Activated CD4-positive, alpha-beta T cell treated with anti-CD3 and anti-CD28 coated beads, Interleukin-2, amount 10 ng/mL, durations not matched to agents 24 days and 14 days (primary cell): ENCODE measurements at regions of chr12 and their contacts with region 1.

Region 1: DNA sequence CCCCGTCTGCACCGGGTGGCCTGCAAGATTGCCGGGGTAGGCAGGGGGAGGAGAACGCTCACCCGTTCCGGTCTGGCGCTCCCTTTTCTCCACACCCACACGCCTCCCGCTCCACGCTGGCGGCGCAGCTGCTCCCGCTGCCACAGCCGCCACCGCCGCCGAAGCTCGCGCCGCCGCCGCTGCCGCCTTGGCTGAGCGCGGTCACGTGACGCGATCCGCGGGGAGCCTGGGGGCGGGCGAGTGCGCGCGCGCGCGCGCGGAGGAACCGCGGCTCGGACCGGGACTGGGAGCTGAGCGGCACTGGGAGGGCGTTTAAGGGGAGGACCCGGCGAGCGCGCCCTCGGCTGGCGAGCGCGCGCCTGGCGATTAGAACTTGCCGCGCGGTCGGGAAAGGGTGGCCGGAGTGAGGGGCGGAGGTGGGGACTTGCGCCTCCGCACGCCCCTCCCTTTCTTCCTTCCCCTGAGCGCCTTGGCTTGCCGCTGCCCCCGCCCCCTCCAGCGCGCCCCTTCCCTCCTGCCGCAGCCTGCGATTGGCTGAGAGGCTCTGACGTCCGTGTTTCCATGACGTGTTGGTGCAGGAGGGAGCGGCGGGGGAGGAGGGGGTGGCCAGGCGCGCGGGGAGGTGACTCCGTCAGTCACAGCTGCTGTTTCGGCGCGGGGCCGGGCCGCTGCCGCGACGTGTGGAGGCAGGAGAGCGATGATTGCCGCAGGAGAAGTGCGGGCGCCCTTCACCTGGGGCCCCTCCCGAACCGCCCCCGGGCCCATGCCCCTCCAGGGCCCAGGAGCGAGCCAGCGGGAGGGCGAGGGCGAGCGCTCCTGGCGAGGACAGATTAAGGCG is 738 bp upstream of the ATP2B1 start:
- DNase-seq: peak; percentile 99
- H3K4me3 Mint-ChIP-seq: peak overlapping the region; percentile 84
- H3K27ac Mint-ChIP-seq: peak overlapping the region; percentile 87
- H3K4me1 Mint-ChIP-seq: peaks cover 28% of the 10 kb centered on the region
- H3K27me3 Mint-ChIP-seq: peaks cover 33% of the 10 kb centered on the region

Region 2: DNA sequence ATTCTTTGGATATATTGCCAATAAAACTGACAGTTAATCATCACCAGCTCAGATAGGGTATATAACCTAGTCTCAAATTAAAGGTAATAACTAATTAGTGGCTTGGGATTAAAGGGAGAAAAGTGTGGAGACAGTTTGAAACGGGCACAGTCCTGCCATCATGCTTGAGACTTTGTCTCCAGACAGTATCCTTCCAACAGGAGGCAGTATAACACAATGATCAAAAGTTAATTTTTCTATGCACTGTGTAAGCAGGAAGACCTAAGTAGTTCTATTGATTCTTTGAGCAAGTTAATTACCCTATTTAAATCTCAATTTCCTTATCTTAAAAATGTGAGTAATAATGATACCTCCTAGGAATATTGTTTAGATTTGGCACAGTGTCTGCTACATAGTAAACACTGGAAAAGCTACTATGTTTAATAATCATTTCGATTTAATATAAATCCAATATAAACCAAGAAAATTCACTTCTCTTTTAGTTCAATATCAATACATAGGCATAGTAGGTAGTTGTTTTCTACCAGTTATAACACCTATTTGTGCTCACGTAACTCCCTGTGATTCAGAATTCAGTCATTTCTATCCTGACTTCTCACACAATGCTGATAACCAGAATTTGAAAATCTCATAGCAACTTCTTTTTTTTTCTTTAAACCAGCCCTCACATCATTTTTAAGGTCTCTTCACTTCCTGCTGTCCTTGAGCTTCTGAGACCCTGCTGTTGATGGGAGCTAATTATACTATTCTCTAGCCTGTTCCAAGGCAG is 238.5 kb before region 1 on chr12:
- intact Hi-C with region 1: loop called (anchors 5 kb)
- DNase-seq: peak; percentile 73
- H3K4me3 Mint-ChIP-seq: no peak overlapping the region
- H3K27ac Mint-ChIP-seq: peak overlapping the region; percentile 22
- H3K4me1 Mint-ChIP-seq: peaks cover 60% of the 10 kb centered on the region
- H3K27me3 Mint-ChIP-seq: no peaks in the 10 kb centered on the region

Region 3: DNA sequence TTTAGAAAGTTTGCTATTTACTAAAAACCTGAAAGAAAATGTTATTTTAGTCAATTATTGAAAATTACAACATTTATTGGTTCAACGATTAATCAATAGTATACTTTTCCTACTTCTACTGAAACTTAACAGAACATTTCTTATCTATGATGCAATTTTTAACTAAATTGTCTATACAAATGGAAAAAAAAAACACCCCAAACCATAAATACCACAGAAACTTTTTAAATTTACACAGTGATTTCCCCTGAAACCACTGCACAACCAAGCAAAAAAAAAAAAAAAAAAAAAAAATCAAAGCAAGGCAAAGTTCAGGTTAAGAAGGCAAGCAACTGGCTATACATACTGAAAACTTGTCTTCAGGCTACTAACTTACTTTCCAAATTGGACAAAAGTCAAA is 111.6 kb before region 1 on chr12:
- intact Hi-C with region 1: loop called (anchors 1 kb)
- DNase-seq: no peak
- H3K4me3 Mint-ChIP-seq: no peak overlapping the region
- H3K27ac Mint-ChIP-seq: peak overlapping the region; percentile 76
- H3K4me1 Mint-ChIP-seq: peaks cover 13% of the 10 kb centered on the region
- H3K27me3 Mint-ChIP-seq: peaks cover 10% of the 10 kb centered on the region

Region 4: DNA sequence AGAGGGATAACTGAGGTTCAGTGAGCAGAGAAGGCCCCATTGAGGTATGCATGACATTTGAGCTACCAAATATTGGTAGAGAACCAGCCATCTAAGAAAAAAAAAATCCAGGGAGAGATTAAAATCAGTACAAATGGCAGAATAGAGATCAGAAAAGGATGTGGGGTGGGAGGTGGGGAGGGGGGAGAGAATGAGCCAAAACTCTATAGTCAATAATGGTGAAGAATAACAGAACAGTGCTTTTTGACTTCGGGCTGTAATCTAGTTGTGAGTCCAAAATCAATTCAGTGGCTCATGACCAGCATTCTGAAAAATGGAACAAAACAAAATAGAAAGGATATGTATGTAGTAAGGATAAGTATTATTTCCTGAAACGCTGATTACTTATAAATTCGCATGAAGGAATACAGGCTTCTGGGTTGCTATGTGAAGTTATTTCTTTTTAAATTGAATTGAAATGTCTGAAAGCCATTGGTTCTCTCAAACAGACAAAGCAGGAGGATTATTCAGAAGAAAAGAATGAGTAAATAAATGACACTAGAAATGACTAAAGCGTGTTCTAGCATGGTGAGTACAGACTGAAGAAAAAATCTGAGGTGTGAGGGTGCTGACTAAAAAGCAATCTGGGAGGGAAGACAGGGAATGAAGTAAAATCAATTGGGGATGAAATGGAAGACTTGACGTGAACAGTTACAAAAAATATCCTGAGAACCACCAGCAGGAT is 73.2 kb before region 1 on chr12:
- intact Hi-C with region 1: no loop called
- DNase-seq: no peak
- H3K4me3 Mint-ChIP-seq: no peak overlapping the region
- H3K27ac Mint-ChIP-seq: no peak overlapping the region
- H3K4me1 Mint-ChIP-seq: peaks cover 2% of the 10 kb centered on the region
- H3K27me3 Mint-ChIP-seq: no peaks in the 10 kb centered on the region

Region 5: GRCh38 chr12:89671469-89671868 is 37.9 kb before region 1 on chr12:
- intact Hi-C with region 1: no loop called
- DNase-seq: no peak
- H3K4me3 Mint-ChIP-seq: no peak overlapping the region
- H3K27ac Mint-ChIP-seq: no peak overlapping the region
- H3K4me1 Mint-ChIP-seq: peaks cover 14% of the 10 kb centered on the region
- H3K27me3 Mint-ChIP-seq: no peaks in the 10 kb centered on the region

Region 6: DNA sequence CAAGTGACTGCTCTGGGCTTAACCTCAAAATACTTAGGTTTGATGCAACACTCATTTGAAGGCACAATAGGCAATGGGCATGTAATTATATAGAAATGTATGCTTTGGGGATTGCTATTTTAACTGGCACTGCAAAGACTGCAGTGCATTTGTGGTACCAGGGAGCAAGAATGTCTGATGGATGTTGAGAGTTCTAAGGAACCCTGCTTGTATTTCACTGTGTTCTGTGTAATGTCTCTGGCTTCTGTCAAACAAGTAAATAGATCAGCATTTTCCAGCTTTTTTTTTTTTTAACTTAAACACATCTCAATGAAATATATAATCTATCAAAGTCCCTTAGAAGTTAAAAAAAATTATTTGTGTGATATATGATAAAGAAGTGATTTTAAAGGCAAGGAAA is 94.0 kb after region 1 on chr12:
- intact Hi-C with region 1: no loop called
- DNase-seq: no peak
- H3K4me3 Mint-ChIP-seq: no peak overlapping the region
- H3K27ac Mint-ChIP-seq: no peak overlapping the region
- H3K4me1 Mint-ChIP-seq: no peaks in the 10 kb centered on the region
- H3K27me3 Mint-ChIP-seq: no peaks in the 10 kb centered on the region

Region 7: GRCh38 chr12:89862511-89863179 is 153.3 kb after region 1 on chr12:
- intact Hi-C with region 1: loop called (anchors 1 kb)
- DNase-seq: peak; percentile 86
- H3K4me3 Mint-ChIP-seq: peak overlapping the region; percentile 84
- H3K27ac Mint-ChIP-seq: peak overlapping the region; percentile 97
- H3K4me1 Mint-ChIP-seq: peaks cover 42% of the 10 kb centered on the region
- H3K27me3 Mint-ChIP-seq: no peaks in the 10 kb centered on the region

Region 8: GRCh38 chr12:89927226-89927698 is 217.9 kb after region 1 on chr12:
- intact Hi-C with region 1: no loop called
- DNase-seq: no peak
- H3K4me3 Mint-ChIP-seq: no peak overlapping the region
- H3K27ac Mint-ChIP-seq: no peak overlapping the region
- H3K4me1 Mint-ChIP-seq: peaks cover 5% of the 10 kb centered on the region
- H3K27me3 Mint-ChIP-seq: no peaks in the 10 kb centered on the region

Region 9: GRCh38 chr12:90042920-90043641 is 333.7 kb after region 1 on chr12:
- intact Hi-C with region 1: loop called (anchors 5 kb)
- DNase-seq: no peak
- H3K4me3 Mint-ChIP-seq: no peak overlapping the region
- H3K27ac Mint-ChIP-seq: no peak overlapping the region
- H3K4me1 Mint-ChIP-seq: peaks cover 12% of the 10 kb centered on the region
- H3K27me3 Mint-ChIP-seq: no peaks in the 10 kb centered on the region